ENCODE measurements at regions of chr20 and their contacts with region 1.

Region 1: DNA sequence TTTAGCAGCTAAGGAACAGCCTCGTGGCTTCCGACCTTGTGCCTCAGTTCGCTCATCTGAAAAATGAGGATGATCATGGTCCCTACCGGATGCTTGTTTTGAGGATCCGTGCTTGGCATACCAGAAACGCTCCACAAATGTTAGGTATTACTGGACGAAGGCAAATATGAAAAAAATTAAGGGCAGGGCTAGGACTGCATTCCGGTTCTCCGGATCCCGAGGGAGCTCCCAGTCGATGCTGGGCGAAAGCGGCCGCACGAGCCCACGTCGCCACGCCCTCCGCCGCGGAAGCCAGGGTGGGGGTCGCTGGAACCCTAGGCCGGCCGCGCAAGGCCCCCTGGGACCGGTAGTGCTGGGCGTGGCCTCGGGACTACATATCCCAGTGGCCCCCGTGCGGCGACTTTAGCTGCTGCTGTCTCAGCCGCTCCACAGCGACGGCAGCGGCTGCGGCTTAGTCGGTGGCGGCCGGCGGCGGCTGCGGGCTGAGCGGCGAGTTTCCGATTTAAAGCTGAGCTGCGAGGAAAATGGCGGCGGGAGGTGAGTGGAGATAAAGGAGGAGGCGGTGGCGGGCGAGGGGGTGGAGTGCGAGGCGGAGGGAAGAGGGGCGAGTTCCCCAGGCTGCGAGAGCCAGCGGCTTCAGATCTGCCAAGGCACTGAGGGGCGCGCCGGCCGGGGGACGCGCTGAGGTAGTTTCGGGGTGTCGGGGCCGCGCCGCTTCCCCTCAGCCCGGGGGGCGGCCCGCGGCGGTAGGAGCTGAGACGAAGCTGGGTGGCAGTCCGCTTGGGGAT is at the start of gene NCOA3:
- DNase-seq: peak; percentile 94 to 96
- ATAC-seq: peak; percentile 97 to 99 (median 98)
- H3K4me3 ChIP-seq: peak within 1 kb of the TSS; percentile 98
- H3K27ac ChIP-seq: peak within 1 kb of the TSS; percentile 89
- H3K4me1 ChIP-seq: peaks cover 30% of the 10 kb centered on the region
- H3K27me3 ChIP-seq: no peaks in the 10 kb centered on the region
- CTCF ChIP-seq: peak; percentile 56
- total RNA-seq, gene NCOA3: 13.0 to 56.9 (median 23.3) TPM

Region 2: DNA sequence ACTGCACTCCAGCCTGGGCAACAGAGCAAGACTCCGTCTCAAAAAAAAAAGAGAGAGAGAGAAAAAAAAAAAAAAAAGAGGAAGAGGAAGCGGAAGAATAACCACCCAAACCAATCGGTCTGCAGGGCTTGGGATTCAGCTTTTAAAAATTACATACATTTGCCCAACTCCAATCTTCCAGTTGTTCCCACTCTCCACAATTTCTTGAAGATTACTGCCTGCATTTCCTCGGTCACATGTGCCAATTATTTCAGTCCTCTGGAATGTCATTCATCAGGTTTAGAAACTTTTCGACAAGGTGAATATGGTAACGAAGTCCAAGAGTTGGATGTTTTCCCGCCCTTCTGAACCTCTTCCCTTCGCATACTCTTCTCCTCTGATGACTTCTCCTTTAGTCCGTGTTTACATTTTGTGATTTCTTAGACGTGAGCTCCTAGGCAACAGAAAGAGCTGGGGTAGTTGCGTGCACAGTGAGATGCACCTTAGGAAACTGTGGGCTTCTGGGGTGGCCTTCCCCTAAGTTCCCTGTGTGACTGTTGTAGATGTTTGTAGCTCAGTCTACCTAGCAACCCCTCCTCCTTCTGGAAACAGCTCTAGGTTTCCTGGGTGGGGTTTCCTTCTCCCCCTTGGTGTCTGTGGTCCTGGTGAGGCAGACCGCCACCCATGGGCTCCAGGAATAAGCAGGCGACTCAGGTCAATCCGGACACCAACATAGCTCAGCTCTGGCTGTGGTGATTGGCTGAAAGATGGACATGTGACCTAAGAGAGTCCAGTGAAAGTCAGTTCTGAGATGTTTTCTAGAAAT is 62.9 kb before region 1 on chr20:
- intact Hi-C with region 1: no loop called
- DNase-seq: no peak
- ATAC-seq: no peak
- H3K4me3 ChIP-seq: no peak overlapping the region
- H3K27ac ChIP-seq: no peak overlapping the region
- H3K4me1 ChIP-seq: no peaks in the 10 kb centered on the region
- H3K27me3 ChIP-seq: no peaks in the 10 kb centered on the region
- CTCF ChIP-seq: no peak

Region 3: DNA sequence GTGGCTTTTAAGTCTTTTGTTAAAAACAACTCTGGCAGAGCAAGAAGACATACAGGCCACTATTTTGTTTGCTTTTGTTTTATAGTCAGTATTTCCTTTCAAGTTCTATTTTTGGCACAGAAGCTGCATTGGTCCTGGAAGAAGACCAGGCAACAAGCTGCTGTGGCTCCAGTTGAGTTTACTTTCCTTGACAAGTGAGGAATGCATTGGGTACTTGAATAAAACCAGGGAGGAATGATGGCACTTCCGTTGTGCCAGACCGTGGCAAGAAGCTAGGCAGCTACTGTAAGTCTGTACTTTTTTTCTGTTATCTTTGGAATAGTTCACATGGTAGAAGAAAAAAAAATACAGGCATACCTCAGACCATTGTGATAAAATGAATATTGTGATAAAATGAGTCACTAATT is 66.3 kb after region 1 on chr20:
- intact Hi-C with region 1: loop called in 1 of 2 experiments (anchors 5 kb)
- DNase-seq: no peak
- ATAC-seq: no peak
- H3K4me3 ChIP-seq: no peak overlapping the region
- H3K27ac ChIP-seq: peak overlapping the region; percentile 8
- H3K4me1 ChIP-seq: peaks cover 42% of the 10 kb centered on the region
- H3K27me3 ChIP-seq: no peaks in the 10 kb centered on the region
- CTCF ChIP-seq: no peak

Region 4: DNA sequence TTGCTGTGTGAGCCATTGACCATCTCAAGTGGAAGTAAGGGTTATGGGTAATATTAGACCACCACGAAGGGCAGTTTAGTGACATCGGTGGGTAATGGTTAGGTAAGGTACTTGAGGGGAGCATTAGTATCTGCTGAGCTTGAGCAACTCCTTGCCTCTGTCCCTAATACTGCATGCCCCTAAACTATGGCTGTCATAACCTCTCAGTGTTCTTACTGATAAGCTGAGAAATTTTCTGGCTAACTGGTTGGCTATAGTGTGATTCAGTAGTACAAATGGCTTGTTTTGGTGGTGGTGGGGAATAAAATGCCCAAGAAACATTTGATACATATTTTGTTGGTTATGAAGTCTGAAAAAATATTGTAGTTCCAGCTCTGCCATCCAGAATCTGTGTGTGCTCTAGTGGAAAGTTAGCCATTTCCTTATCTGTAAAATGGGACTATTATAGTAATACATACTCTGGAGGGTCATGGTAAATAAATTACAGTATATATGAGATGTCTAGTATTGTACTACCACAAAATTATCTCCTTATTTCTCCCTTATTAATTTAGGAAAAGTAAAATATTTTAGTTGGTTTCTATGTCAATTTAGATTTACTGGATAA is 113.1 kb after region 1 on chr20:
- intact Hi-C with region 1: loop called (anchors 5 kb)
- DNase-seq: no peak
- ATAC-seq: no peak
- H3K4me3 ChIP-seq: no peak overlapping the region
- H3K27ac ChIP-seq: no peak overlapping the region
- H3K4me1 ChIP-seq: peaks cover 34% of the 10 kb centered on the region
- H3K27me3 ChIP-seq: no peaks in the 10 kb centered on the region
- CTCF ChIP-seq: no peak

Measured in psoas muscle (tissue), 8 donors.